A549 (cell line): ENCODE measurements at regions of chrX and their contacts with region 1.

Region 1: GRCh38 chrX:107894038-107894437 is 68.4 kb downstream of the MID2 start:
- DNase-seq: peak; percentile 35 to 61
- ATAC-seq: peak; percentile 62 to 88; a peak in 5 of 6 replicates
- H3K4me3 ChIP-seq: no peak overlapping the region
- H3K27ac ChIP-seq: no peak overlapping the region
- H3K4me1 ChIP-seq: no peaks in the 10 kb centered on the region
- CTCF ChIP-seq: peak; percentile 61
- EP300 ChIP-seq: no peak
- POLR2A ChIP-seq: no peak
- RAD21 ChIP-seq: peak; percentile 66 to 76

Region 2: DNA sequence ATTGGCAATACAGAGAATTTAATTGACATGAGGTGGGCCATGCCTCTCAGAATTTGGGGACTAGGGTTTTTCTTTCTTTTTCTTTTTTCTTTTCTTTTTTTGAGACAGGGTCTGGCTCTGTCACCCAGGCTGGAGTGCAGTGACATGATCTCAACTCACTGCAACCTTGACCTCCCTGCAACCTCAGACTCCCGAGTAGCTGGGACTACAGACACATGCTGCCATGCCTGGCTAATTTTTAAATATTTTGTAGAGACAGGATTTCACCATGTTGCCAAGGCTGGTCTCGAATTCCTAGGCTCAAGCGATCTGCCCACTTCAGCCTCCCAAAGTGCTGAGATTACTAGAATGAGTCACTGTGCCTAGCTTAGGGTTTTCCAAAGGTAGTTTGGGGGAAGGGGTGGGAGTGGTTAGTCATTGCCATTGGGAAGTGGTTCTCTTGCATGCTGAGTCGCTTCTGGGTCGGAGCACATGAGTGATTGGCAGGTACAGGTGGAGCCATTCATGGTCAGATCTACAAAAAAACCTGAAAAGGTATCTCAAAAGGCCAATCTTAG is 13.9 kb before region 1 on chrX:
- CTCF ChIA-PET with region 1: interaction called, 19 read pairs
- POLR2A ChIA-PET with region 1: no interaction called
- DNase-seq: no peak
- ATAC-seq: no peak
- H3K4me3 ChIP-seq: no peak overlapping the region
- H3K27ac ChIP-seq: no peak overlapping the region
- H3K4me1 ChIP-seq: no peaks in the 10 kb centered on the region
- CTCF ChIP-seq: no peak
- EP300 ChIP-seq: no peak
- POLR2A ChIP-seq: no peak
- RAD21 ChIP-seq: no peak